ENCODE measurements at regions of chr9 and their contacts with region 1.

Region 1: GRCh38 chr9:33076358-33077004 is at the start of gene SMU1:
- DNase-seq: peak; percentile 98
- ATAC-seq: peak; percentile 98
- H3K4me3 Mint-ChIP-seq: peak within 1 kb of the TSS; percentile 98
- H3K27ac Mint-ChIP-seq: peak within 1 kb of the TSS; percentile 99
- H3K4me1 Mint-ChIP-seq: peaks cover 43% of the 10 kb centered on the region
- H3K27me3 Mint-ChIP-seq: no peaks in the 10 kb centered on the region
- total RNA-seq, gene SMU1: 20.0 to 23.0 TPM

Region 2: DNA sequence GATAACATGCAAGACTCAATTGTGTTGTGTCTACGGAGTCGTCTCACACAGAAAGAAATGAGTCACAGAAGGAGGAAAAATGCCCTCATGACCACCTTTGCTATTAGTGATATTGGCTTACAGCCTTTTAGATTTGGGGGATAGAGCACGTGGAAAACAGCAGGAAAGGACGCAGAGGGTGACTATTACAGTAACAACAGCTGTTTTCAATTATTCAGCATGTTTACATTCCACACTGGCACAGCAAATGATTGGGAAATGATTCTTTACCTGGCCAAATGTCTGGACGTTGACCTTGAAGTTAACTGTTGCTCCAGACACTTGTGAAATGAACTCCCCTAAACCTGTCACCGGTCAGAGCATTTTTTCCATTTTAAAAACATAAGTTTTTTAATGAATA is 121.8 kb before region 1 on chr9:
- CTCF ChIA-PET with region 1: no interaction called
- DNase-seq: no peak
- ATAC-seq: no peak
- H3K4me3 Mint-ChIP-seq: no peak overlapping the region
- H3K27ac Mint-ChIP-seq: no peak overlapping the region
- H3K4me1 Mint-ChIP-seq: no peaks in the 10 kb centered on the region
- H3K27me3 Mint-ChIP-seq: no peaks in the 10 kb centered on the region

Region 3: GRCh38 chr9:33065157-33066076 is 11.1 kb before region 1 on chr9:
- CTCF ChIA-PET with region 1: interaction called, 14 read pairs
- DNase-seq: no peak
- ATAC-seq: peak; percentile 64
- H3K4me3 Mint-ChIP-seq: peak overlapping the region; percentile 58
- H3K27ac Mint-ChIP-seq: peak overlapping the region; percentile 97
- H3K4me1 Mint-ChIP-seq: peaks cover 22% of the 10 kb centered on the region
- H3K27me3 Mint-ChIP-seq: no peaks in the 10 kb centered on the region

Region 4: GRCh38 chr9:33092634-33093033 is 16.2 kb after region 1 on chr9:
- CTCF ChIA-PET with region 1: no interaction called
- DNase-seq: no peak
- ATAC-seq: no peak
- H3K4me3 Mint-ChIP-seq: no peak overlapping the region
- H3K27ac Mint-ChIP-seq: no peak overlapping the region
- H3K4me1 Mint-ChIP-seq: peaks cover 6% of the 10 kb centered on the region
- H3K27me3 Mint-ChIP-seq: peaks cover 11% of the 10 kb centered on the region